BJ (cell line): ENCODE measurements at regions of chr10 and their contacts with region 1.

Region 1: DNA sequence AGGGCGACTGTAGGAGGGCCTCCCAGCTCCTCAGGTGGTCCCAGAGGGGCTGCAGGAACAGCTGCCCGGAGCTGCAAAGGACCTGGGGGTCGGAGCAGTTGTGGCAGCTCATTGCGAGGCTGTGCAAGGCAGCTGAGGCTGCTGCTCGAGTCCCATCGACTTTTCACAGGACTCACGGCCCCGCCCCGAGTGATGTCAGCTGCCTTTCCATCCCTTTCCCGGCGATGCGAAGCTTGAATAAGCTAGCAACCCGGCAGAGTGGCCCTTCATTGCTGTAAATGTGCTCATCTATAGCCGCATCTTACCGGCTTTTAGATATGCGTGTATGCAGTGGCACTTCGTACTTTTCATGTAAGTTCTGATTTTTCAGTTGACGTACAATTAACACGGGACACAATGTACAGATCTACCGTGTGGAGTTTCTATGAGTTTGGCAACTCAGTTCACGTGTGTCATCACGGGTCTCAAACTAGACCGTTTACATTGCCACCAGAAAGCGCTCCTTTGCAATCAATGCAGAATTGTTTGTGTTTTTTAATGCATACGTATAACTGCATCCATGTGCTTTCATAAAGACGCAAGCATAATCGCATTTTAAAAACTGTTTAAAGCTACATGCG is at the start of gene CH25H:
- DNase-seq: no peak
- H3K4me3 ChIP-seq: peak within 1 kb of the TSS; percentile 36
- H3K27me3 ChIP-seq: peaks cover 7% of the 10 kb centered on the region
- CTCF ChIP-seq: no peak
- polyA plus RNA-seq, gene CH25H: 0.53 and 0.86 TPM in 2 replicates

Region 2: GRCh38 chr10:89029785-89030437 is 177.4 kb before region 1 on chr10:
- CTCF ChIA-PET with region 1: interaction called, 21 read pairs
- POLR2A ChIA-PET with region 1: interaction called, 4 read pairs
- DNase-seq: peak; percentile 31
- H3K4me3 ChIP-seq: no peak overlapping the region
- H3K27me3 ChIP-seq: no peaks in the 10 kb centered on the region
- CTCF ChIP-seq: peak; percentile 75

Region 3: GRCh38 chr10:89224739-89225443 is 17.6 kb after region 1 on chr10:
- CTCF ChIA-PET with region 1: no interaction called
- POLR2A ChIA-PET with region 1: no interaction called
- DNase-seq: no peak
- H3K4me3 ChIP-seq: no peak overlapping the region
- H3K27me3 ChIP-seq: no peaks in the 10 kb centered on the region
- CTCF ChIP-seq: peak; percentile 12; the same call in 1 of the 2 replicates